CD4-positive, alpha-beta T cell (primary cell): ENCODE measurements at regions of chr1 and their contacts with region 1.

Region 1: DNA sequence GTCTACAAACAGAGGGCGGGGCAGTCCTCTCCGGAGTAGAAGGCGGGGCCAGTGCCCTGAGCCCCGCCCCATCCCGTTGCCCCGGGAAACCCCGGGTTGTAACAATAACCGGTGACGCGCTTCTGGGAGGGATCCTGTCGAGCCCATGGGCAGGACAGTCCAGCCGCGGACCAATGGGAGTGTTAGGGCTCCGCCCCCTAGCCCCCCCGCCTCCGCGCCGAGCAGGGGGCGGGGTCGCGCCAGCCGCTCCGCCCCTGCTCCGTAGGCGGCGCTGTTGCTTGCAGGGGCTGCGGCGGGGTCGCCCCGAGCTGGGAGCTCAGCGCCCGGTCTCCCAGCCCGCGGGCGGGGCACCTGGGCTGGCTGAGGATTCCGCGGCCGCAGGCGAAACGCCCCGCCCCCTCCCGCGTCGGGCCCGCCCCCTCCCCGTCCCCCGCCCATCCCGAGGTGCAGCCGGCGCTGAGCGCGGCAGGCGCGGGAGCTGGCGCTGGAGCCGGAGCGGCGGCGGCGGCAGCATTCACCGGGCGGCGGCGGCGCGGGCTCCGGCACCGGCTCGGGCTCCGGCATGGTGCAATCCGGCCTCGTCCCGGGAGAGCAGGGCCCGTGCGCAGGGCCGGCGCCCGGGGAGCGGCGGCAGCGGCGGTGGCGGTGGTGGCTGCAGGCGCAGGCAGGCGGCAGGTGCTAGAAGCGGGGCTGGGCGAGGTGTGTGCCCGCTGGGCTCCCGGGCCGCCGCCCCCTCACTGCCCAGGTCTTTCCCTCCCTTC is at the start of gene FOXO6:
- DNase-seq: peak; percentile 86 to 97 (median 93)
- ATAC-seq: peak; percentile 86
- H3K4me3 ChIP-seq: peak within 1 kb of the TSS; percentile 42
- H3K4me3 Mint-ChIP-seq: peak within 1 kb of the TSS; percentile 89
- H3K27ac ChIP-seq: no peak within 1 kb of the TSS
- H3K27ac Mint-ChIP-seq: peak within 1 kb of the TSS; percentile 77
- H3K4me1 ChIP-seq: peaks cover 34% of the 10 kb centered on the region
- H3K4me1 Mint-ChIP-seq: peaks cover 19% of the 10 kb centered on the region
- H3K27me3 ChIP-seq: peaks cover 19 to 25% of the 10 kb centered on the region in 2 experiments
- H3K27me3 Mint-ChIP-seq: peaks cover 30% of the 10 kb centered on the region
- CTCF ChIP-seq: peak; percentile 18
- total RNA-seq, gene FOXO6: 1.2 to 2.2 TPM

Region 2: DNA sequence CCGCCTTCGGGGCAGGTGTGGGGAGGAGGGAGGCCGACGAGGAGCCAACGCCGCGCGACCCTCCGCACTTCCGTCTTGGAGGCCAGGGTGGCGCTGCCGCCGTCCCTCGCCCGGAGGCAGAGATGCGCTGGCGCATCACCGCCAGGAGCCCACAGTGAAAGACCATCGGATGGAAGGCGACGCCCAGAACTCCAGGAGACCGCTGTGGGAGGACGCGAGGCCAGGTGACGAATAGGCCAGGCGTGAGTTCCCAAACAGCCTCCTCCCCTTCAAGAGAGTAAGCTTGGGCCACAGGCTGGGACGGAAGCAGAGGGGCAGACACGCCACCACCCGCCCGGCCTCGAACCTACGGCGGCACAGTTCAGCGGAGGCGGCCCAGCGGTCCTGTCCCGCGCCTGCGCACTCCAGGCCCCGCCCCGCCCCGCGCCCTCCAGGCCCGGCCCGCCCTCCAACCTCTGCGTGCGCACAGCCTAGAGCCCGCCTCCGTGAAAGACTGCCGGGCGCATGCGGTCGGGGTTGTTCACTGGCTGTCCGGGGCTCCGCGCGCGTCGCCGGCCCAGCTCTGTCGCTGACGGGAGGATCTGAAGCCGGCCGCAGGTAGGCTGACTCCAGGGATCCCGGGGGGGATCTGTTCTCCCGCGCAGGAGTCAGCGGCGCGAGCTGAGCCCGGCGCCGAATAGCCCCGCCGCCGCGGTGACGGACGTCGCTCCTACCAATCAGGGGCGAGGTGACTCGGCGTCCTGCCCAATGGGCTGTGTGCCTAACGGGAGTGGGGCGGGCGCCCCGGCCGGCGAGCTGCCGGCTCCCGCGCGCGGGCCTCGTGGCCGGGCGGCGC is 381.7 kb before region 1 on chr1 and contains the start of gene CTPS1:
- CTCF ChIA-PET with region 1: no interaction called
- POLR2A ChIA-PET with region 1: interaction called, 3 read pairs
- intact Hi-C with region 1: loop called in 1 of 2 experiments (anchors 10 kb)
- DNase-seq: peak; percentile 92 to 98 (median 96)
- ATAC-seq: peak; percentile 86
- H3K4me3 ChIP-seq: peak within 1 kb of the TSS; percentile 82
- H3K4me3 Mint-ChIP-seq: peak within 1 kb of the TSS; percentile 90
- H3K27ac ChIP-seq: peak within 1 kb of the TSS; percentile 81 to 89
- H3K27ac Mint-ChIP-seq: peak within 1 kb of the TSS; percentile 89
- H3K4me1 ChIP-seq: peaks cover 25% of the 10 kb centered on the region
- H3K4me1 Mint-ChIP-seq: peaks cover 14% of the 10 kb centered on the region
- H3K27me3 ChIP-seq: no peaks in the 10 kb centered on the region
- H3K27me3 Mint-ChIP-seq: no peaks in the 10 kb centered on the region
- CTCF ChIP-seq: peak; percentile 12
- total RNA-seq, gene CTPS1: 37.1 to 37.4 TPM

Region 3: GRCh38 chr1:41241782-41242341 is 119.3 kb before region 1 on chr1 and contains the start of gene SCMH1:
- CTCF ChIA-PET with region 1: no interaction called
- POLR2A ChIA-PET with region 1: no interaction called
- intact Hi-C with region 1: loop called in 1 of 2 experiments (anchors 5 kb)
- DNase-seq: peak; percentile 24 to 83 (median 52)
- ATAC-seq: peak; percentile 77
- H3K4me3 ChIP-seq: peak within 1 kb of the TSS; percentile 65
- H3K4me3 Mint-ChIP-seq: peak within 1 kb of the TSS; percentile 92
- H3K27ac ChIP-seq: peak within 1 kb of the TSS; percentile 57 to 66
- H3K27ac Mint-ChIP-seq: peak within 1 kb of the TSS; percentile 91
- H3K4me1 ChIP-seq: peaks cover 17% of the 10 kb centered on the region
- H3K4me1 Mint-ChIP-seq: peaks cover 14% of the 10 kb centered on the region
- H3K27me3 ChIP-seq: no peaks in the 10 kb centered on the region
- H3K27me3 Mint-ChIP-seq: no peaks in the 10 kb centered on the region
- CTCF ChIP-seq: no peak
- total RNA-seq, gene SCMH1: 14.4 to 19.2 TPM

Region 4: DNA sequence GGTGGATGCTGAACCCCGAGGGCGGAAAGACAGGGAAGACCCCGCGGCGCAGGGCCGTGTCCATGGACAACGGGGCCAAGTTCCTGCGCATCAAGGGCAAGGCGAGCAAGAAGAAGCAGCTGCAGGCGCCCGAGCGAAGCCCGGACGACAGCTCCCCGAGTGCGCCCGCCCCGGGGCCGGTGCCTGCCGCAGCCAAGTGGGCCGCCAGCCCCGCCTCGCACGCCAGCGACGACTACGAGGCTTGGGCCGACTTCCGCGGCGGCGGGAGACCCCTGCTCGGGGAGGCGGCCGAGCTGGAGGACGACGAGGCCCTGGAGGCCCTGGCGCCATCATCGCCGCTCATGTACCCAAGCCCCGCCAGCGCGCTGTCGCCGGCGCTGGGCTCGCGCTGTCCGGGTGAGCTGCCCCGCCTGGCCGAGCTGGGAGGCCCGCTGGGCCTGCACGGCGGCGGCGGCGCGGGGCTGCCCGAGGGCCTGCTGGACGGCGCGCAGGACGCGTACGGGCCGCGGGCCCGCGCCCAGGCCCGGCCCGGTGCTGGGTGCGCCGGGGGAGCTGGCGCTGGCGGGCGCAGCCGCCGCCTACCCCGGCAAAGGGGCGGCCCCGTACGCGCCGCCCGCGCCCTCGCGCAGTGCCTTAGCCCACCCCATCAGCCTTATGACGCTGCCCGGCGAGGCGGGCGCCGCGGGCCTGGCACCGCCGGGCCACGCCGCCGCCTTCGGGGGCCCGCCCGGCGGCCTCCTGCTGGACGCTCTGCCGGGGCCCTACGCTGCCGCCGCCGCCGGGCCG is 20.7 kb after region 1 on chr1:
- CTCF ChIA-PET with region 1: no interaction called
- POLR2A ChIA-PET with region 1: interaction called, 13 read pairs
- intact Hi-C with region 1: loop called in 1 of 2 experiments (anchors 2 kb)
- DNase-seq: peak in 7 of 14 experiments; percentile 19 to 69 (median 44)
- ATAC-seq: peak; percentile 65
- H3K4me3 ChIP-seq: peak overlapping the region; percentile 22
- H3K4me3 Mint-ChIP-seq: peak overlapping the region; percentile 88
- H3K27ac ChIP-seq: no peak overlapping the region
- H3K27ac Mint-ChIP-seq: no peak overlapping the region
- H3K4me1 ChIP-seq: peaks cover 23% of the 10 kb centered on the region
- H3K4me1 Mint-ChIP-seq: peaks cover 10% of the 10 kb centered on the region
- H3K27me3 ChIP-seq: peaks cover 65 to 84% of the 10 kb centered on the region in 2 experiments
- H3K27me3 Mint-ChIP-seq: peaks cover 80% of the 10 kb centered on the region
- CTCF ChIP-seq: no peak

Region 5: DNA sequence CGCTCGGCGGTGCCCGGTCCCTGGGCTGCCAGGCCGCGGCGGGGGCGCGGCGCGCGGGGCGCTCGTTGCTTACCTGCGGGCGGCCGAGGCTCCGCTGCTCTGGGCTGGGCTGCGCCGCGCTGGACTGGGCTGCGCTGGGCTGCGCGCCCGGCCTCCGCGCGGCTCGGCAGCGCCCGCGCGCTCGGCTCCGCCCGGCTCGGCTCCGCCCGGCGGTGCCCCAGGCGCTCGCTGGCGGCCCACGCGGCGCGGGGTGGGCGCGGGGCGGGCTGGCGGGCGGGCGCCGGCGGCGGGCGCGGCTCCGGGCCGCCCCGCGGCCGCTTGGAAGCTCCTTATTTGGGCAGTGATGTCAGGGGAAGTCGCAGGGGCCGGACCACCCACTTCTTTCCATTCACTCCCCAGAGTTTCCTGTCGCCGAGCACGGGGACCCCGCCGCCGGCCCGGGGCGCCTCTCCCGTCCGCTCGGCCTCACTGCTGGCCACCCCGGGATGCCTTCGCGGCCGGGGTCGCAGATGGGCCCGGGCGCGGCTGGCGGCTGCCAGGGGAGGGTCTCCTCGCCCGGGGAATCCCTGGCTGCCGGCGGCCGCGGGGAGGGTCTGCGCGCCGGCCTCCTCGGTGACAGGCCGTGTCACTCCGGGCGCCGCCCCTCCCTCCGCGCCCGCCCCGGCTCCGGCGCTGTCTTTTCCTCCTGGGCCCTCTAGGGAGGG is 301.0 kb after region 1 on chr1:
- CTCF ChIA-PET with region 1: no interaction called
- POLR2A ChIA-PET with region 1: no interaction called
- intact Hi-C with region 1: loop called in 1 of 2 experiments (anchors 10 kb)
- DNase-seq: peak; percentile 39 to 90 (median 60)
- ATAC-seq: peak; percentile 78
- H3K4me3 ChIP-seq: peak overlapping the region; percentile 69
- H3K4me3 Mint-ChIP-seq: peak overlapping the region; percentile 58
- H3K27ac ChIP-seq: peak overlapping the region; percentile 55 to 63
- H3K27ac Mint-ChIP-seq: no peak overlapping the region
- H3K4me1 ChIP-seq: peaks cover 91% of the 10 kb centered on the region
- H3K4me1 Mint-ChIP-seq: peaks cover 84% of the 10 kb centered on the region
- H3K27me3 ChIP-seq: no peaks in the 10 kb centered on the region
- H3K27me3 Mint-ChIP-seq: no peaks in the 10 kb centered on the region
- CTCF ChIP-seq: no peak